SK-N-SH (cell line): ENCODE measurements at regions of chr1 and their contacts with region 1.

Region 1: DNA sequence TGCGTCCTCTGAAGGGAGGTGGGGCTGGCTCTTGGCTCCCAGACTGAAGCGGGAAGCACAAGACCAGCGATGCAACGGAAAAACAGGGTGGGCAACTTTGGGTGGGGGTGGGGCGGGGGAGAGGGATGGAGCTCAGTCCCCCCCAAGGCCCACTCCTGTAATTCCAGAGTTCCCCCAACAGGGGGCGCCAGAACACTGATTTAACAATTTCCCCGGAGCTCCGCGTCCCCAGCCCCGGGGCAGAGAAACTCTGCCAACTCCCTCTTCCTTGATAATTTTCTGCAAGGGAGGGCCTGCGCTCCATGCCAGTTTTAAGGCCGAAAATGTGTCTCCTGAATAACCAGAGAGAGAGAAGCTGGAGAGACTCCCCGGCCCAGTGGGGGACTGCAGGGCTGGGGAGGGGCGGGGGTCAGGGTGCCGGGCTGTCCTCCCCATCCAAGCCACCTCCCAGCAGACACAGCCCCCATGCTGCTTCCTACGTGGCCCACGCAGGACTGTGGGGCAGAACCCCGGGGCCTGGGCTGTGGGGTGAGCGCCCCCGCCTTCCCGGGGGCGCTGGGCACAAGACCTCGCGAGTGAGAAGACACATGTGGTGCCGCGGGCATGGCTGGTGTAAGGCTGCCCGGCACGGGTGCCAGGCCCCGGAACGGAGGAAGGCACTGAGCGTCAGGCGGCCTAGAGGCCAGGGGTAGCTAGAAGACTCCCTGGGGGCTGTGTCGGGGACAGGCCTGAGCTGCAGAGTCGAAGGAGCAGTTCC is 51.4 kb downstream of the KIF21B start:
- DNase-seq: peak; percentile 92
- H3K4me3 ChIP-seq: peak overlapping the region; percentile 9 to 29; a peak in 2 of 4 replicates
- H3K27ac ChIP-seq: no peak overlapping the region
- H3K4me1 ChIP-seq: peaks cover 0 to 3% of the 10 kb centered on the region in 2 experiments; a peak in 1 of 4 replicates
- H3K27me3 ChIP-seq: no peaks in the 10 kb centered on the region
- CTCF ChIP-seq: peak; percentile 79
- EP300 ChIP-seq: no peak
- RAD21 ChIP-seq: peak; percentile 87

Region 2: DNA sequence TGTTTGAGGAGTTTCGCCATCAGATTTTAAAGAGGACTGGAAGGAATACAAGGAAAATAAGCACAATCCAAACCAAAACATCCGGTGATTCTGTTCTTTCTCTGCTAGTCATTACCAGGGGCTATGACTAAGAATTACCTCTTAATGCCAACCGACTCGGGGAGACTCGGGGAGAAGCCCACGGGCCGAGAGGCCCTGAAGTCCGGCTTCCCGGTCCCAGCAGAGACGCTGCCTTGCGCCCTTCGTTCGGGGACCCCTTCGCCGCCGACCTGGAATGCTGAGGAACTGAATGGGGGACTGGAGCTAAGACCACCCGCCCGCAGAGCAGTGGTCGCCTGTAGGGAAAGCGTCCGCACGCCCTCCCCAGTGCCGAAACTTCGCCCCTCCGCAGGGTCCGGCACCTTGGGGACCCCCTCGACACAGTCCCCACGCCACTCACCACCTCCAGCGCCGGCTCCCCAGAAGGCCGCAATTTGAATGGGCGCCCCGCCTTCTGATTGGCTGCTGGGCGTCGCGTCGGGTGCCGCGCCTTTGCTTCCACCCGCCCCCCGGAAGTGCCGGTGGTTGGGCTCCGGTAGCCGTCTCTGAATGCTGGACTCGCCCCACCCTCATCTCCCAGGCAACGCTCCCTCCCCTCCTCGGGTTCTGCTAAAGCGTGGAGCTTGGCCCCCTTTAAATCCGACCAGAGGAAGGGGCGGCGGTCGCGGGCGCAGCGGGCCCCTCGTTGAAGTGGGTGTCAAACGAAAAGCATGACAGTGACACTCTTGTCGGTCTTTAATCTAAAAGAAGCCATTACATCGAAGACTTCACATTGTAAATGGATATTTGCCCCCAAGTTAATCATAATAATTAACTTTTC is 351.6 kb before region 1 on chr1 and contains the start of gene KIF14:
- CTCF ChIA-PET with region 1: interaction called, 24 read pairs
- POLR2A ChIA-PET with region 1: no interaction called
- DNase-seq: peak; percentile 97
- H3K4me3 ChIP-seq: peak within 1 kb of the TSS; percentile 86 to 87
- H3K27ac ChIP-seq: peak within 1 kb of the TSS; percentile 48 to 75
- H3K4me1 ChIP-seq: no peaks in the 10 kb centered on the region; a peak in 2 of 4 replicates
- H3K27me3 ChIP-seq: no peaks in the 10 kb centered on the region
- CTCF ChIP-seq: no peak
- EP300 ChIP-seq: no peak
- RAD21 ChIP-seq: no peak
- polyA plus RNA-seq, gene KIF14: 1.2 and 1.4 TPM in 2 replicates

Region 3: DNA sequence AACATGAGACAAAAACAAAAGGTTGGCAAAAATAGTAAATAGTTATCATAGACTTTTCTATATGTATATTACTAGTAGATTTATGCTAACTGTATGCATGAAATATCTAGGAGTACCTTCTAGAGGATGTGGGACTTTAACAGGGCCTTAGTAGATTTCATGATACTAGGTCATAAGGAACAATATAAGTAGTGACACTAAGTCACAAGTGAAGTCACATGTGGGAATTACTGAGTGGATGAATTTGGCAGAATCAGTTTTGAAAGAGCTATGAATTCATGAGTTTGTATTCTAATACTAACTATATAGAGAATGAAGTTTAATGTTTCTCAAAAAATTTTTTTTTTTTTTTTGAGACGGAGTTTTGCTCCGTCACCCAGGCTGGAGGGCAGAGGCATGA is 152.4 kb before region 1 on chr1:
- CTCF ChIA-PET with region 1: no interaction called
- POLR2A ChIA-PET with region 1: no interaction called
- DNase-seq: no peak
- H3K4me3 ChIP-seq: no peak overlapping the region
- H3K27ac ChIP-seq: no peak overlapping the region
- H3K4me1 ChIP-seq: no peaks in the 10 kb centered on the region; a peak in 1 of 4 replicates
- H3K27me3 ChIP-seq: no peaks in the 10 kb centered on the region
- CTCF ChIP-seq: no peak
- EP300 ChIP-seq: no peak
- RAD21 ChIP-seq: no peak

Region 4: GRCh38 chr1:200959411-200959921 is 12.7 kb before region 1 on chr1:
- CTCF ChIA-PET with region 1: interaction called, 44 read pairs
- POLR2A ChIA-PET with region 1: no interaction called
- DNase-seq: no peak
- H3K4me3 ChIP-seq: no peak overlapping the region
- H3K27ac ChIP-seq: no peak overlapping the region
- H3K4me1 ChIP-seq: no peaks in the 10 kb centered on the region
- H3K27me3 ChIP-seq: 0 out of 2 replicates have a peak, but pooled peaks cover 4% of the 10 kb centered on the region
- CTCF ChIP-seq: no peak
- EP300 ChIP-seq: no peak
- RAD21 ChIP-seq: no peak

Region 5: DNA sequence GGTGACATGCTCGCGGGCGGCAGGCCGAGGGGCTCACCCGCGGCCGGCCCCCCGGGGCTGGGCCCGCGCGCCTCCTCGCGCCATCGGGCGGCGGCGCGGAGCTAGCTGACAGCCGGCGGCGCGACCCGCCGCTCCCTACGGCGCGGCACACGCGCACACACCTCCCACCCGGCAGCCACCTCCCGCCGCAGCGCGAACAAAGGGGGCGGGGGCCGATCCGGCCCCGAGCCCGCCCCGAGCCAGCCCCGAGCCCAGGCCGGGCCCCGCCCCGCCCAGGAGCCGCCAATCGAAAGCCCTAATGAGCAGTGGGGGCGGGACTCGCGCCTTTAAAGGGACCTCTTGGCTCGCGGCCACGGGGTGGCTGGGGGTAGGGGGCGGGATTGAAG is 51.4 kb after region 1 on chr1 and contains the start of gene KIF21B:
- CTCF ChIA-PET with region 1: interaction called, 70 read pairs
- POLR2A ChIA-PET with region 1: no interaction called
- DNase-seq: peak; percentile 97
- H3K4me3 ChIP-seq: peak within 1 kb of the TSS; percentile 51 to 58
- H3K27ac ChIP-seq: no peak within 1 kb of the TSS
- H3K4me1 ChIP-seq: peaks cover 5 to 7% of the 10 kb centered on the region in 2 experiments; a peak in 1 of 4 replicates
- H3K27me3 ChIP-seq: no peaks in the 10 kb centered on the region
- CTCF ChIP-seq: no peak
- EP300 ChIP-seq: no peak
- RAD21 ChIP-seq: no peak
- polyA plus RNA-seq, gene KIF21B: 0.24 and 0.26 TPM in 2 replicates

Region 6: DNA sequence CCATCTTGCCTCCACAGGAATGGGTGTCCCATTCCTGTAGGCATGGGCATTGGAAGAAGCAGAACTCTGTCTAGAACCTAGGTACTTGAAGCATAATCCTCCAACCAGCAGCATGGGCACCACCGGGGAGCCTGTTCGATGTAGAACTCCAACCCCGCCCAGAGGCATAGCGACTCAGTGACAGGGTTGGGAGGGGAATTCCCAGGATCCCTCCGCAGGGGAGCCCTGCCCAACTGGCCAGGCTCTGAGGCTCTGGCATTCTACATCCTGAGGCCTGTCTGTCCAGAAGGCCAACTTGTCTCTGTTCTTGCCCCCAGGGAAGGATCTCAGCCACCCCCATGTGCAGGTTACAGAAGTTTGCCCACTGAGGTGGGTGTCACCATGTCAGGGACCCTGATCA is 101.9 kb after region 1 on chr1:
- CTCF ChIA-PET with region 1: interaction called, 10 read pairs
- POLR2A ChIA-PET with region 1: no interaction called
- DNase-seq: no peak
- H3K4me3 ChIP-seq: no peak overlapping the region
- H3K27ac ChIP-seq: no peak overlapping the region
- H3K4me1 ChIP-seq: no peaks in the 10 kb centered on the region
- H3K27me3 ChIP-seq: peaks cover 25% of the 10 kb centered on the region
- CTCF ChIP-seq: no peak
- EP300 ChIP-seq: no peak
- RAD21 ChIP-seq: no peak

Region 7: GRCh38 chr1:201114236-201115131 is 142.4 kb after region 1 on chr1:
- CTCF ChIA-PET with region 1: interaction called, 114 read pairs
- POLR2A ChIA-PET with region 1: interaction called, 3 read pairs
- DNase-seq: peak; percentile 97
- H3K4me3 ChIP-seq: peak overlapping the region; percentile 65 to 97
- H3K27ac ChIP-seq: peak overlapping the region in 1 of 2 experiments; percentile 39; a peak in 1 of 4 replicates
- H3K4me1 ChIP-seq: peaks cover 0 to 7% of the 10 kb centered on the region in 2 experiments; a peak in 1 of 4 replicates
- H3K27me3 ChIP-seq: peaks cover 5% of the 10 kb centered on the region; the same call in 1 of the 2 replicates
- CTCF ChIP-seq: peak; percentile 85
- EP300 ChIP-seq: no peak
- RAD21 ChIP-seq: peak; percentile 95

Region 8: DNA sequence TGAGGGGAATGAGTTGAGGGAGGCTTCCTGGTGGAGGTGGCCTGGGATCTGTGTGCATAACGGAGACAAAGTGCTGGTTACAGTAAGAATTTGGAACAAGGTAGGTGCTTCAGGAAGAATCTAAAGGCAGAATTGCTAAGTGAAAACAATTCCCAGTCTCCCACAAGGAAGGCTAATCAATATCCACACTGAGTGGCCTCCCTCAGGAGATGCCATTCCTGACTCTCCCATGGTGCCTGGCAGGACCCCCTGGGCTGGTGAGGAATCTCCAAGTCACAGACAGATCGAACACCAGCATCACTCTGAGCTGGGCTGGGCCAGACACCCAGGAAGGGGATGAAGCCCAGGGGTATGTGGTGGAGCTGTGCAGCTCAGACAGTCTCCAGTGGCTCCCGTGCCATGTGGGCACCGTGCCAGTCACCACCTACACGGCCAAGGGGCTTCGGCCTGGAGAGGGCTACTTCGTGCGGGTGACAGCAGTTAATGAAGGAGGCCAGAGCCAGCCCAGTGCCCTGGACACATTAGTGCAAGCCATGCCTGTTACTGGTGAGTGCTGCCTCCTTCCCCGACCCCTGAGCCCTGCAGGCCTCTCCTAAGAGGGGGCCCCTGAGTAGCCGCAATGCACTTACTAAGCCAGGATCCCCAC is 249.2 kb after region 1 on chr1:
- CTCF ChIA-PET with region 1: interaction called, 14 read pairs
- POLR2A ChIA-PET with region 1: no interaction called
- DNase-seq: peak; percentile 29
- H3K4me3 ChIP-seq: no peak overlapping the region
- H3K27ac ChIP-seq: no peak overlapping the region
- H3K4me1 ChIP-seq: peaks cover 0 to 3% of the 10 kb centered on the region in 2 experiments; a peak in 1 of 4 replicates
- H3K27me3 ChIP-seq: no peaks in the 10 kb centered on the region
- CTCF ChIP-seq: no peak
- EP300 ChIP-seq: no peak
- RAD21 ChIP-seq: no peak